Activated T-helper 1 cell treated with anti-CD3 and anti-CD28 coated beads, Interleukin-12 subunit alpha, Interleukin-12 subunit beta, Interleukin-2, Interleukin-4 antibody, amounts not matched to agents 30 ng/mL and 10 ng/mL and 1 ng/mL, durations not matched to agents 14 hours and 24 hours and 36 hours (primary cell): ENCODE measurements at regions of chr13 and their contacts with region 1.

Region 1: DNA sequence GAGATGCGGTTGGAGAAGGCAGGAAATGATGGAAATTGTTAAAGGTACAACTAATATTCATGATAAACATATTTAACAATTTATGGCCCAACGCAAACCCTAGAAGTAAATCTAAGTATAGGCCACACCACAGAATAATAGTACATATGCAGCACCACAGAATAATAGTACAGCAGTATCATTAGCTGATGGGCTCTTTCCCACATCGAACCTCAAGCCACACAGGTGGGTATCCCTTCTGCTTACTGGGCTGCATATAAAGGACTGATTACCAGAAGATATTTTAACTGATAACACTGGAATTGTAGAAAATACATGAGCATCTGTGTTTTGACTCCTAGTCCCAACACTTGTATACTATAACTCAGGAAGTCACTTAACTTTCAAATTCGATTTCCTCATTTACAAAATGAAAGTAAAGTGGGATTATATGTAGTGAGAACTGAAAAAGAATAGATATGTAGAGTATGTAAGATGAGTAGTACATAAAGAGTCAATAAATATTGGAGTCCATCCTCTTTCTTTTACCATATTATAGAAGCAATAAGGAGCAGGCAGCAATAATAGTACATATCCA is 91.5 kb downstream of the TSC22D1 start:
- DNase-seq: no peak
- H3K4me3 Mint-ChIP-seq: peak overlapping the region; percentile 24
- H3K27ac Mint-ChIP-seq: no peak overlapping the region
- H3K4me1 Mint-ChIP-seq: peaks cover 17% of the 10 kb centered on the region
- H3K27me3 Mint-ChIP-seq: peaks cover 7% of the 10 kb centered on the region

Region 2: DNA sequence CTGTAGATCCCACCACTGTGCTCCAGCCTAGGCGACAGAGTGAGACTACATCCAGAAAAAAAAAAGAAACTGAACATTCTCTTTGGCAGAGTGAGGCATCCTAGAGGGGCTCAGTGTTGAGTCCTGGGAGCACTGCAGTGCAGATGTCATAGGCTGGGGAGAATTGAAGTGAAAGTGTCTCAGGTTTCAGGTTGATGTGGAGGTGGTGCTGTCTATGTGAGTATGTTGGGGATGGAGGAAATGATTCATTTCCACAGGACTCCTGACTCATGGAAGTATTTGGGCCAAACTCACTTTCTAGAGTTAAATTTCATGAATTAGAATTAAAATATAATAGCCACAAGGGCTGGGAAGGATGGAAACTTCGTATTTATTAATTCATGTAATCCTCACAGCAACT is 225.9 kb after region 1 on chr13:
- intact Hi-C with region 1: loop called (anchors 5 kb)
- DNase-seq: no peak
- H3K4me3 Mint-ChIP-seq: no peak overlapping the region
- H3K27ac Mint-ChIP-seq: no peak overlapping the region
- H3K4me1 Mint-ChIP-seq: peaks cover 18% of the 10 kb centered on the region
- H3K27me3 Mint-ChIP-seq: peaks cover 26% of the 10 kb centered on the region

Region 3: GRCh38 chr13:44879463-44880058 is 394.9 kb after region 1 on chr13:
- intact Hi-C with region 1: loop called (anchors 1 kb)
- DNase-seq: no peak
- H3K4me3 Mint-ChIP-seq: no peak overlapping the region
- H3K27ac Mint-ChIP-seq: no peak overlapping the region
- H3K4me1 Mint-ChIP-seq: peaks cover 11% of the 10 kb centered on the region
- H3K27me3 Mint-ChIP-seq: no peaks in the 10 kb centered on the region

Region 4: GRCh38 chr13:44988973-44989817 is 504.5 kb after region 1 on chr13 and contains the starts of genes GPALPP1 and NUFIP1:
- intact Hi-C with region 1: loop called (anchors 5 kb)
- DNase-seq: peak; percentile 90
- H3K4me3 Mint-ChIP-seq: peak within 1 kb of the TSS; percentile 91
- H3K27ac Mint-ChIP-seq: peak within 1 kb of the TSS; percentile 91
- H3K4me1 Mint-ChIP-seq: peaks cover 43% of the 10 kb centered on the region
- H3K27me3 Mint-ChIP-seq: no peaks in the 10 kb centered on the region
- total RNA-seq, gene GPALPP1: 29.8 and 33.5 TPM in 2 replicates
- total RNA-seq, gene NUFIP1: 12.2 and 13.5 TPM in 2 replicates

Region 5: GRCh38 chr13:45119991-45120864 is 635.6 kb after region 1 on chr13 and contains the start of gene GTF2F2:
- intact Hi-C with region 1: loop called (anchors 5 kb)
- DNase-seq: peak; percentile 85
- H3K4me3 Mint-ChIP-seq: no peak within 1 kb of the TSS
- H3K27ac Mint-ChIP-seq: no peak within 1 kb of the TSS
- H3K4me1 Mint-ChIP-seq: peaks cover 13% of the 10 kb centered on the region
- H3K27me3 Mint-ChIP-seq: no peaks in the 10 kb centered on the region
- total RNA-seq, gene GTF2F2: 30.1 and 30.8 TPM in 2 replicates